ENCODE measurements at regions of chr4 and their contacts with region 1.

Region 1: GRCh38 chr4:56405016-56405415 is 17.7 kb upstream of the AASDH start:
- DNase-seq: no peak
- H3K4me3 Mint-ChIP-seq: no peak overlapping the region
- H3K27ac Mint-ChIP-seq: no peak overlapping the region
- H3K4me1 Mint-ChIP-seq: peaks cover 6% of the 10 kb centered on the region
- H3K27me3 Mint-ChIP-seq: no peaks in the 10 kb centered on the region

Region 2: DNA sequence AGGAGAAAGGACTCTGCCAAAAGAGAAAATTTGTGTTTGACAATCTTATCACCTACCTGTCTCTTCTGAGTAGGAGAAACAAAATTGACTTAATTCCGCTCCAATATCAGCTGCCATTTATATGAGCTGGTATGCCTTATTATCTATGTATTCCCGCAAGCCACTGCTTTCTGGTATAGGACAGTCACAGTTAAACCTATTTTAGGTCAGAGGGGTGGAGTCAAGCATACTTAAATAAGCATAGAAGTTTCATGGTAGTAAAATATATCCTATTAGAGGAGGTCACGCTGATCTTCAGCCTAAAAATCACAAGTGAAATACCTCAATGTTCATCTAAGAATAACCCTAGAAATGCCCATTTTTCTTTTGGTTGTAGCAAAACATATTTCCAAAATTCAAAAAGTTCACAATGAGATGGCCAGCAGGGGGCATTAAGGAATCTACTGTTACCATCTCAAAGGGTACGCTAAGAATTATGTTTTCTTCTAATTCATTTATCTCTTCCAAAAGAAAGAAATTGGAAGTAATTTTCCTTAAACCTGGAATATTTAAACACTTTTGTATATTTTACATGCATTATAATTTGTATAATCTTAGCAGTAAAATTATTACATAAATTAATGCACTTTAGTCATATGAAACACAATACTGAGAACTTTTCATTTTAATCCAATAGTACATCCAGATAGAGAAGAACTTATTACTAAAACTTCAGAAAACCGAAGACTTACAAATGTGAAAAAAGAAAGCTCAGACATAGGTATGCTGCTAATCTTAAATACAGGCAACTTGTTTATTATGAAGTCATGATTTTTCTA is 19.9 kb after region 1 on chr4:
- CTCF ChIA-PET with region 1: interaction called, 11 read pairs
- POLR2A ChIA-PET with region 1: no interaction called
- DNase-seq: peak; percentile 53
- H3K4me3 Mint-ChIP-seq: no peak overlapping the region
- H3K27ac Mint-ChIP-seq: no peak overlapping the region
- H3K4me1 Mint-ChIP-seq: peaks cover 20% of the 10 kb centered on the region
- H3K27me3 Mint-ChIP-seq: no peaks in the 10 kb centered on the region